Activated CD4-positive, alpha-beta T cell treated with anti-CD3 and anti-CD28 coated beads for 36 hours (primary cell): ENCODE measurements at regions of chr14 and their contacts with region 1.

Region 1: DNA sequence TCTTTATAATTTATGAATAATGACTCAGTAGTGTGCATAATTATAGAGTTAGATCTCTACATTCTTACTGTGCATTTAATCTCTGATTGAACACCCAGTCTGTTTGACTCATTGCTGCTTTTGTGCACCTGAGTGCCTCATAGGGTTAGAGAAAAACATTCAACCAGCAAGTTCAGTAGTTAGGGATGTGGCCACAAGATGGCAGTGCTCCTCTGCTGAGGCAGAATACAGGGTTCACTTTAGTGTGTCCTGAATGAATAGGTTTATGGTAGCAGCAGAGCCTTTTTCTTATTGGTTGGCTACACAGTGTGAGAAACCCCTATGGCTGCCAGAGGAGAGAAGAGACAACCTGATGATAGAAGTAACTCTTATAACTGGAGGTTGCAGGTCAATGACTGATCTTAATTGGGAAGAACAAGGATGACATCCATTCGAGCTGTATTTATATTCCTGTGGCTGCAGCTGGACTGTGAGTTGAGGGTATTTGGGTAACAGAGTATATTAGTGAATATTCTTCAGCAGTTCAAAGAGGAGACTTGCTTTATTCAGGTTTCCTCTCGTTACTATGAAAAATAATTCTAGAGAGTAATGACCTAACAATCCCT is 194.9 kb upstream of the OR4E1 start:
- DNase-seq: peak; percentile 90
- ATAC-seq: peak; percentile 92
- H3K4me3 Mint-ChIP-seq: peak overlapping the region; percentile 65
- H3K27ac Mint-ChIP-seq: peak overlapping the region; percentile 65
- H3K4me1 Mint-ChIP-seq: peaks cover 34% of the 10 kb centered on the region
- H3K27me3 Mint-ChIP-seq: no peaks in the 10 kb centered on the region

Region 2: GRCh38 chr14:21414137-21414631 is 454.4 kb before region 1 on chr14:
- CTCF ChIA-PET with region 1: no interaction called
- POLR2A ChIA-PET with region 1: interaction called, 12 read pairs
- intact Hi-C with region 1: no loop called
- DNase-seq: no peak
- ATAC-seq: peak; percentile 91
- H3K4me3 Mint-ChIP-seq: no peak overlapping the region
- H3K27ac Mint-ChIP-seq: peak overlapping the region; percentile 88
- H3K4me1 Mint-ChIP-seq: peaks cover 26% of the 10 kb centered on the region
- H3K27me3 Mint-ChIP-seq: no peaks in the 10 kb centered on the region

Region 3: DNA sequence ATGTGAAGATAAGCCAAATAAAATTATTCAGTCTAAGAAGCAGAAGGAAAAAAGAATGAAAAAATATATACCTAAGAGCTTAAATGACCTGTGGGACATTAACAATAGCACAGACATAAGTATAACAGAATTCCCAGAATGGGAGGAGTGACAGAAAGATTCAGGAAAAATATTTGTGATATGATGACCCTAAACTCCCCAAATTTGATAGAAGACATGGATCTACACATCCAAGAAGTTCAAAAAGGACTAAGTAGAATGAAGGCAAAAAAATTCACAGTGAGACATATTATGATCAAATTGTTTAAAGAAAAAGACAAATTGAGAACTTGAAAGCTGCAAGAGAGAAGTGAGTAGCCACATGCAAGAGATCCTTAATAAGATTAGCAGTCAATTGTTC is 16.5 kb after region 1 on chr14:
- CTCF ChIA-PET with region 1: interaction called, 3 read pairs
- POLR2A ChIA-PET with region 1: no interaction called
- intact Hi-C with region 1: loop called in 1 of 2 experiments (anchors 2 kb)
- DNase-seq: no peak
- ATAC-seq: no peak
- H3K4me3 Mint-ChIP-seq: no peak overlapping the region
- H3K27ac Mint-ChIP-seq: no peak overlapping the region
- H3K4me1 Mint-ChIP-seq: peaks cover 19% of the 10 kb centered on the region
- H3K27me3 Mint-ChIP-seq: no peaks in the 10 kb centered on the region

Region 4: DNA sequence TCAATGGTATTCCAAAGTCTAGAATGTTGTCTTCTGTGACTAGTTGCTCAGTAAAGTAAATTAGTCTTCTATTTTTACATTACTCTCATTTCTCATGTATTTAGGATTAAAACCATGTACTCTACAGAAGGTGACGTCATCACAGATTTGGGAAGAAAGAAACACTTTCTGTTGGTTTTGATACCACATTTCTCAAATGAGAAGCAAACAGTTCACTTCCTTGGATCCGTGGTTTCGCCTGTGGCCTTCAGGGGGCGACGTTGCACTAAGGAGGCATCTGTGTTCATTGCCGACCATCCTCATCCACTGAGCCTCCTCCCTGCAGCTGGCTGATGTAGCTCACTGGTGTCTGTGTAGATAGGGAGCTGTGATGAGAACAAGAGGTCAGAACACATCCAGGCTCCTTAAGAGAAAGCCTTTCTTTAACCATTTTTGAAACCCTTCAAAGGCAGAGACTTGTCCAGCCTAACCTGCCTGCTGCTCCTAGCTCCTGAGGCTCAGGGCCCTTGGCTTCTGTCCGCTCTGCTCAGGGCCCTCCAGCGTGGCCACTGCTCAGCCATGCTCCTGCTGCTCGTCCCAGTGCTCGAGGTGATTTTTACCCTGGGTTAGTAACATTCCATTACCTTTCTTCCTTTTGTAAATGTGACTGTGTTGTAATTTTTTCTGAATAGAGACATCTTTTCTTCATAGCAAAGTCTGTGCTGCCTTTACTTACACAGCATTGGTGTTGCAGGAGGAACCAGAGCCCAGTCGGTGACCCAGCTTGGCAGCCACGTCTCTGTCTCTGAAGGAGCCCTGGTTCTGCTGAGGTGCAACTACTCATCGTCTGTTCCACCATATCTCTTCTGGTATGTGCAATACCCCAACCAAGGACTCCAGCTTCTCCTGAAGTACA is 25.7 kb after region 1 on chr14:
- CTCF ChIA-PET with region 1: interaction called, 3 read pairs
- POLR2A ChIA-PET with region 1: no interaction called
- intact Hi-C with region 1: loop called in 1 of 2 experiments (anchors 2 kb)
- DNase-seq: peak; percentile 77
- ATAC-seq: peak; percentile 87
- H3K4me3 Mint-ChIP-seq: peak overlapping the region; percentile 65
- H3K27ac Mint-ChIP-seq: peak overlapping the region; percentile 85
- H3K4me1 Mint-ChIP-seq: peaks cover 11% of the 10 kb centered on the region
- H3K27me3 Mint-ChIP-seq: no peaks in the 10 kb centered on the region

Region 5: DNA sequence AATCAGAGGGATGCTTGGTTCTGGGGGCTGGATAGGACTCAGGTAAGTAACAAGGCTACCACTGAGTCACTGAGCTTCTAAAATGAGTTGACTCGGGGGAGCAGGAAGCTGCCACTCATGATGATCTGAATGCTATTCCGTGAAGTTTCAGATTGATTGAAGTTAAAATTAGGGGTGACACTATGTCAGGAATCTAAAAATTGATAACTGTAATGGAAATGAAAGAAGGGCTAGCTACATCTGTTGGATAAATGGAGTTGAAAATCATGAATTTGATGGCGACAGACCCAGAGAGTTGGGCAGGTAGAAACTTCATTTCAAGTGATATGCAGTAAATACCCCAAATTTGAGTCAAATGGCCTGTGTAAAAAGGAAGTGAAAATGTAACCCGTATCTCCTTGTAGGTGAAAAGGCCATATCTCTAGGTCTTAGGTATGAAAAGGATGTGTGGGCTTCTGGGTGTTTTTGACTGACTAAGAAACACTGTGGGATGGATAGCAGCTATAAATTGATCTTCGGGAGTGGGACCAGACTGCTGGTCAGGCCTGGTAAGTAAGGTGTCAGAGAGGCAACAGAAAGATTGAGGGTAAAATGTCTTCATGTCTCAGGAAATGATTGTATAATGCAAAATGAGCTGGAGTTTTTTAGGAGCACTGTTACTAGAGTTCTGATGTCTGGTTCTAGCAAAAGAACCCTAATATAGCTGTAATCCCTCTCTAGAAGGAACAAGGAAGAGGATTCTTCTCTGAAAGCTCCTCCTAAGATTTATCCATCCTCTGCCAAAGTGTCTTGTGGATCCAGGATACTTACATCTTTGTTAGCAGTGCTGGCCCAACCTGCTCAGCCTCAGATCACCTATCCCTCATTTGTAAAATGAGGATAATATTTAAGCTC is 663.2 kb after region 1 on chr14:
- CTCF ChIA-PET with region 1: no interaction called
- POLR2A ChIA-PET with region 1: no interaction called
- intact Hi-C with region 1: loop called in 1 of 2 experiments (anchors 5 kb)
- DNase-seq: peak; percentile 60
- ATAC-seq: peak; percentile 70
- H3K4me3 Mint-ChIP-seq: peak overlapping the region; percentile 84
- H3K27ac Mint-ChIP-seq: peak overlapping the region; percentile 100
- H3K4me1 Mint-ChIP-seq: peaks cover 87% of the 10 kb centered on the region
- H3K27me3 Mint-ChIP-seq: no peaks in the 10 kb centered on the region